ENCODE measurements at regions of chr6 and their contacts with region 1.

Region 1: DNA sequence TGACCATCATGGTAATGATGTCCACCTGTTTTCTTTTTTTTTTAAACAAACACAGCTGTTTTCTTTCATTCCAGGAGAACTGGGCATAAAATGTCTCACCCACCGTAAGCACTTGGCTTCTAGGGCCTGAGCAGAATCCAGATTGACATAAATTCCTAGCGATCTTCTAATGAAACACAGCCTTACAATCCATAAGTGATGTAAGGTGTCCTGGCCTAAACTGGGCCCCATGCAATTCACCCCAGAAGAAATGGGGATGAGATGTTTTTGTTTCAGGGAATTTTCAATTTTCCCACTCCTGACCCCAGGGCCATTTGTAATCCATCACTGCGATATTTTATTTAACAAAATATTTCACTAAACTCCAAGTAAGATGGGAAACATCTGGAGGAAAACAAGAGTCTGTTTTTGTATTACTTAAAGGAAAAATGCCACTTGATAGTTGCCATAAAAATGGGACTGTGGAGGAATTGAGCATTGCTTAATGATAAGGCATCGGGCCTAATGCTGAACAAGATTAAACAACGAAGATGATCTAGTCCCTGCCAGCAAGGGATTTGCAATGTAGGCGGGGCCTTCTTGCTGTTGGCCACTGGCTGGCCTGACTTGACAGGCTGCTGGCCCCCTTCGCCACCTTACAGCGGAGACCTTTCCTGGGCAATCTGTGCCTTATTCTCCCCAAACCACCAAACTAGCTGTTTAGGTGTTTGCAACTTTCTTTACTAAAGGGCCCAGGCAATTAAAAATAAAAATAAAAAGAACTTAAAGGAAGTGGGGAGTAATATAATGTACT is 183.7 kb downstream of the CD109 start:
- DNase-seq: no peak
- ATAC-seq: no peak
- H3K4me3 ChIP-seq: no peak overlapping the region
- H3K4me3 Mint-ChIP-seq: no peak overlapping the region
- H3K27ac ChIP-seq: no peak overlapping the region
- H3K27ac Mint-ChIP-seq: no peak overlapping the region
- H3K4me1 ChIP-seq: no peaks in the 10 kb centered on the region
- H3K4me1 Mint-ChIP-seq: no peaks in the 10 kb centered on the region
- H3K27me3 ChIP-seq: no peaks in the 10 kb centered on the region
- H3K27me3 Mint-ChIP-seq: no peaks in the 10 kb centered on the region
- CTCF ChIP-seq: no peak

Region 2: GRCh38 chr6:73893696-73894095 is 14.0 kb after region 1 on chr6:
- CTCF ChIA-PET with region 1: no interaction called
- POLR2A ChIA-PET with region 1: no interaction called
- intact Hi-C with region 1: loop called (anchors 1 kb)
- DNase-seq: no peak
- ATAC-seq: no peak
- H3K4me3 ChIP-seq: no peak overlapping the region
- H3K4me3 Mint-ChIP-seq: no peak overlapping the region
- H3K27ac ChIP-seq: no peak overlapping the region
- H3K27ac Mint-ChIP-seq: no peak overlapping the region
- H3K4me1 ChIP-seq: no peaks in the 10 kb centered on the region
- H3K4me1 Mint-ChIP-seq: no peaks in the 10 kb centered on the region
- H3K27me3 ChIP-seq: no peaks in the 10 kb centered on the region
- H3K27me3 Mint-ChIP-seq: peaks cover 11% of the 10 kb centered on the region
- CTCF ChIP-seq: no peak

Measured in CD4-positive, alpha-beta T cell (primary cell).